ENCODE measurements at regions of chr6 and their contacts with region 1.

Region 1: GRCh38 chr6:90508753-90509152 is 78.1 kb downstream of the MAP3K7 start:
- DNase-seq: peak in 1 of 2 experiments; percentile 61
- H3K4me3 ChIP-seq: no peak overlapping the region
- H3K27ac ChIP-seq: no peak overlapping the region
- H3K4me1 ChIP-seq: no peaks in the 10 kb centered on the region
- H3K27me3 ChIP-seq: no peaks in the 10 kb centered on the region
- CTCF ChIP-seq: peak; percentile 51 to 67 (median 59)
- EP300 ChIP-seq: no peak
- POLR2A ChIP-seq: no peak
- RAD21 ChIP-seq: peak; percentile 85 to 88

Region 2: GRCh38 chr6:90493332-90493731 is 15.4 kb before region 1 on chr6:
- CTCF ChIA-PET with region 1: interaction called, 16 read pairs
- POLR2A ChIA-PET with region 1: interaction called, 8 read pairs
- DNase-seq: no peak
- H3K4me3 ChIP-seq: no peak overlapping the region
- H3K27ac ChIP-seq: no peak overlapping the region
- H3K4me1 ChIP-seq: peaks cover 7 to 35% (median 15%) of the 10 kb centered on the region in 4 experiments
- H3K27me3 ChIP-seq: no peaks in the 10 kb centered on the region
- CTCF ChIP-seq: no peak
- EP300 ChIP-seq: no peak
- POLR2A ChIP-seq: no peak
- RAD21 ChIP-seq: no peak